Thyroid gland (tissue), 4 donors: ENCODE measurements at regions of chr16 and their contacts with region 1.

Region 1: GRCh38 chr16:46853713-46854443 is 22.9 kb upstream of the C16orf87 start:
- DNase-seq: peak; percentile 84 to 89
- H3K4me3 ChIP-seq: no peak overlapping the region
- H3K27ac ChIP-seq: no peak overlapping the region
- H3K4me1 ChIP-seq: no peaks in the 10 kb centered on the region
- H3K27me3 ChIP-seq: no peaks in the 10 kb centered on the region
- CTCF ChIP-seq: peak; percentile 44 to 94 (median 79)
- POLR2A ChIP-seq: peak in 1 of 2 donors; percentile 4

Region 2: DNA sequence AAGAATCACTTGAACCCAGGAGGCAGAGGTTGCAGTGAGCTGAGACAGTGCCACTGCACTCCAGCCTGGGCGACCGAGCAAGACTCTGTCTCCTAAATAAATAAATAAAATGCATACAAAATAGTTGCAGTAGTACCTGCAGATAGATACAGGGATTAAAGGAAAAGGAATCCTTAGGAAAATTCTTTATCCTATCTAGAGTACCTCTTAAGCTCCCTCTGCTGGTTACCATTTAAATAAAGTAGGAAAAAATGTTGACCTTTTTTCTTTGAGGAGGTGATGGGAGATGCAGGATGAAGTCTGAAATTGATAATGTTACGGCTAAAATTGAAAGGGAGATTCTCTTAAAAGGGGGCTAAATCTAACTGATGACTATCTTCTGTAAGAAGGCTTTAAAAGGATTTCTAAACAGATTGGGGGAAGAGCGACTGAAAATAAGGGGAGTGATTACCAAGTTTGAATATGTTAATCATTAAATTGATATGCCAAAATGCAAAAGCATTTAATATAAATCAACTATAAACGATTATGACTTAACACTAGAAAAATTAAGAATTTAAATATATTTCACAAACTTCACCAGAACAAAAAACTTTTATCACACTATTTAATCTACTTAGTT is 52.3 kb before region 1 on chr16:
- intact Hi-C with region 1: no loop called
- DNase-seq: no peak
- H3K4me3 ChIP-seq: no peak overlapping the region
- H3K27ac ChIP-seq: no peak overlapping the region
- H3K4me1 ChIP-seq: no peaks in the 10 kb centered on the region
- H3K27me3 ChIP-seq: no peaks in the 10 kb centered on the region
- CTCF ChIP-seq: peak in 1 of 6 experiments; percentile 41
- POLR2A ChIP-seq: no peak

Region 3: DNA sequence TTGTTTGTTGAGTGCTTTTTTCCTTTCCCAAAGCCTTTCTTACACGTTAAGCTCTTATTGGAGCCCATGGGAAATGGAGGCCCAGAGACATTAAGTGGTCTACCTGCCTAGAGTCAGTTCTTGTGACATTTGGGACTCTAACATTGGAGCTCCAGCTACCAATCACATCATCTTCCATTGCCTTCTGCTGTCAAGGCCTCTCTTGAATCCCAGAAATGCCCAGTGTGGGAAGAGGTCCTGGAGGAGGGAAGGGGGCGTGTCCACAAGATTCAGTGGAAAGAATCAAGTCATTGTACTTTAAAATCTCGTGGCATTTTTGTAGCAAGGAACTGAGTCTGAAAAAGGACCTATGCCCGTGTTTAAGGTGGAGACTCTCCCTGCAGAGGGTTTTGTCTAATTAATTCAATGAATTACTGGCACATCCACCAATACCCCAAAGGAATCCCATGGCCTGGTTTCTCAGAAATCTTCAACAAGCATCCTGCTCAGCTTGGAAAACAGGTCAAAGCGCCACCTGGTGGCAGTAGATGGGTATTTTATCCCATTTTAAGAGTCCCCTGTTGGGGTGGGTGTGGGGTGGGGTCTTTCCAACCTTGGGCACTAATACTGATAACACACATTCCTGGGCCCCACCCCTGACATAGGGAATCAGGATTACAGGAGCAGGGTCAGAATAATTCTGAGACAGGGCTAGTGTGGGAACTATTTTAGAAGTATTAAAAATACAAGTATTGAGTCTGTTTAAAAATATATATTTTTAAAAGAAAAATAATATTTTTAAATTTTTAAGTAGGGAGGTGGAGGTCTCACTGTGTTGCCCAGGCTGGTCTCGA is 54.9 kb after region 1 on chr16:
- intact Hi-C with region 1: loop called (anchors 2 kb)
- DNase-seq: peak; percentile 51 to 61
- H3K4me3 ChIP-seq: no peak overlapping the region
- H3K27ac ChIP-seq: no peak overlapping the region
- H3K4me1 ChIP-seq: peaks cover 0 to 9% of the 10 kb centered on the region in 2 donors
- H3K27me3 ChIP-seq: no peaks in the 10 kb centered on the region
- CTCF ChIP-seq: peak; percentile 38 to 81 (median 63)
- POLR2A ChIP-seq: no peak

Region 4: DNA sequence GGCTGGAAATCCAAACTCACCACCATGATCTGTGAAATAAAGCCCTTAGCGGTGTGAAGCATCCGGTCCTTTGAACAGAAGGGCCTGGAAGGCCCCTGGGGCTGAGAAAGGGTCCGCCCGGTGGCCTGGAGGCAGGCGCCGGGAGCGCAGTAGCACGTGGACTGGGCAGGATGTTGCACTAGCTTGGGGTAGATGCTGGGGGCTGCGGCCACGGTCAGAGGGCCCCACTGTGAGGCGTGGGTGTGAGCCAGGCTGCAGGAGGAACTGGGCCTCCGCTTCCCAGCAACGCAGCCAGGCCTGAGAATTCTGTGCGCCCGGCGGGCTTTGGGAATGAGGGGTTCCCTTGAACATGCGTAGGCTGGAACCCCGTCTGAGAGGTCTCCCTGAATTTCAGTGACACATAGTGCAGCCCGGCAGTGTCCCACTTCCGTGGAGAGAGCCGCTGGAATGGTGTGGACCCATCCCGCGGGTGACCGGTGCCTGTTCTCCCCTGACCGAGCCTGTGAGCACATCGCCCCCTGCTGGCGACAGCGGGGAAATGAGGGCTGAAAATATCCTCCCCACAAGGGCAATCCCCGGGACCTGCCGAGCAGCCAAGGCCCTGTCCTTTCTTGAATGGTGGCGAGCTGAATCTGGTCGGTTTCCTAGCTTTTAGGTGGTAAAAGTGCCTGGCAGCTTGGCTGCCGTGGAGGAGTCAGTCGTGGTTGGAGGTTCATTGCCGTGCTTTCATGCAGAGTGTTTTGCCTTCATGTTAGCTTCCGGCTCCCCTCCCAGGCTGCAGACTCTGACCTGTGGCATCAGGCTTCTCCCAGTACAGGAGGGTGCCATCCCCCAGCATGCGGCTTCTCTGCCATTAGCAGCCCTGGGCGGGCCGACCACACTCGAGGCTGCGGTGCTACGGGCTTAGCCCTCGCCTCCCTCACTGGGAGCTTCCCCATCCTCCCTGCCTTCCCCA is 75.8 kb after region 1 on chr16:
- intact Hi-C with region 1: loop called (anchors 5 kb)
- DNase-seq: peak; percentile 52 to 72
- H3K4me3 ChIP-seq: no peak overlapping the region
- H3K27ac ChIP-seq: no peak overlapping the region
- H3K4me1 ChIP-seq: no peaks in the 10 kb centered on the region
- H3K27me3 ChIP-seq: no peaks in the 10 kb centered on the region
- CTCF ChIP-seq: peak; percentile 59 to 90 (median 70)
- POLR2A ChIP-seq: no peak